ENCODE measurements at regions of chr15 and their contacts with region 1.

Region 1: DNA sequence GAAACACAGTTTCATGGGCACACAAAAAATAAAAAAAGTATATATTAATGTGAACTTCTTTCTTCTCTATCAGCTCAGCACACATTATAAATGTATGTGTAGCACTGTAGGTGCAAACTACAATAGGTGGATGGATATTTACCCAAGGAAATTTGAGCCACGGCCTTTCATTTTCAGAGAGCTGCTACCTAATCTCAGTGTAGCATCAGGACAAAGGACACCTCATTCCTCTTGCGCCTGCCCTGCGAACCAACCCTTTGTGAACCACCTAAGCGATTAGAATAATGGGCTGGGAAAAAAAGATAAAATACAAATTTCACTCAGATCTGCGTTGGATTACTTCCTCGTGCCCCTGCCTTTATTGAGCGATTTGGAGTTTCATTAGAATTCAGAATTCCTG is 263.2 kb downstream of the NR2F2 start:
- DNase-seq: no peak
- H3K4me3 ChIP-seq: no peak overlapping the region
- H3K27ac ChIP-seq: no peak overlapping the region
- H3K4me1 ChIP-seq: no peaks in the 10 kb centered on the region
- H3K27me3 ChIP-seq: no peaks in the 10 kb centered on the region
- CTCF ChIP-seq: no peak
- EP300 ChIP-seq: no peak
- POLR2A ChIP-seq: no peak

Region 2: DNA sequence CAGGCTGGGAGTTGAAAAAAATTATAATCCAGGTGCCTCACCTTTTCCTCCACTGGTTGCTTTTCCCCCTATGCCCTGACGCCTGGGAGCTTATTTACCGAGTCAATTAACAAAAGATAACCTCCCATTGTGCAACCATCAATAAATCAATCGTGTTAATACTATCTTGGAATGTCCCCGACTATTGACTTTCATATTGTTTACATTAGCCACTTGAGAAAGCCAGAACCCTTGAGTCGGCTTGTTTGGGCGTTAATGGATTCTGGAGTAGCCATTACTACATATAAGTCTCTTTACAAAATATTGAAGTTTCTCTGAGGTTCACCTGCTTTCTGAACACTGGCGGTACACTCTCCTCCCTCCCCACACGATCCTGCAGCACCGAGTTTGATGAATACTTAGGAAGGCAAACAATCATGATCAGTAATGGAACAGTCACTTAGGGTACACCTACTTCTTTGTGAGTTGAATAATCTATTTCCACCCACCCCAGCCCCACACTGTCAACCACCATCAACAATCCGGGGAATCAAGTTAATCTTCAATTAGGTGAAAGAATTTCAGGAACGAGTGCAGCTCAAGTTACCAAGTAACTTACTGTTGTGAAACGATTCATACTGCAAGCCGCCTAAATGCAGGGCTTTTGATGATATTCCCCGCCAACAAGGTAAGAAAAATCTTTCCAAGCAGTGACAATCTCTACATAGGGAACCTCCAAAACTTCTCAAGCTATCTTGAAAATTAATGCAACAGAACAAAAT is 422.6 kb before region 1 on chr15:
- in situ Hi-C with region 1: no loop called
- intact Hi-C with region 1: no loop called
- DNase-seq: no peak
- H3K4me3 ChIP-seq: no peak overlapping the region
- H3K27ac ChIP-seq: no peak overlapping the region
- H3K4me1 ChIP-seq: peaks cover 0 to 2% (median 0%) of the 10 kb centered on the region in 4 donors
- H3K27me3 ChIP-seq: no peaks in the 10 kb centered on the region
- CTCF ChIP-seq: no peak
- EP300 ChIP-seq: no peak
- POLR2A ChIP-seq: no peak

Region 3: GRCh38 chr15:96462777-96463750 is 130.7 kb before region 1 on chr15:
- in situ Hi-C with region 1: no loop called
- intact Hi-C with region 1: no loop called
- DNase-seq: no peak
- H3K4me3 ChIP-seq: no peak overlapping the region
- H3K27ac ChIP-seq: no peak overlapping the region
- H3K4me1 ChIP-seq: no peaks in the 10 kb centered on the region
- H3K27me3 ChIP-seq: peaks cover 5% of the 10 kb centered on the region
- CTCF ChIP-seq: no peak
- EP300 ChIP-seq: no peak
- POLR2A ChIP-seq: no peak

Region 4: DNA sequence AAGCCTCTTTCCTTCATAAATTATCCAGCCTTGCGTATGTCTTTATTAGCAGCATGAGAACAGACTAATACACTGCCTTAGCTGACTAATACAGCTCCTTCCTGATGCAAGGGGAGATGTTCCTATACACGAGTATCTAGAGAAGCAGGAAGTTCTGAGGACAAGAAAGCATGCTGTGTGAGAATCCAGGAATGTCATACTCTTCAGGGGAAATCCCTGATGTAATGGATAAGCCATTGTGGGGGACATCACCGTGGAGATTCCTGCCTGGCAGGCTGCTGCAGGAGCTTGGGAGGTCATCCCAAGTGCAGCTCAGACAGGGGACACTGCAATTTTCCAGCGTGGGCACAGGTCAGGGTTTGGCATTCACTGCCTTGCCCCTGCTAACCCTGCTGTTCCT is 213.6 kb after region 1 on chr15:
- in situ Hi-C with region 1: no loop called
- intact Hi-C with region 1: loop called (anchors 10 kb)
- DNase-seq: no peak
- H3K4me3 ChIP-seq: no peak overlapping the region
- H3K27ac ChIP-seq: no peak overlapping the region
- H3K4me1 ChIP-seq: no peaks in the 10 kb centered on the region
- H3K27me3 ChIP-seq: no peaks in the 10 kb centered on the region
- CTCF ChIP-seq: no peak
- EP300 ChIP-seq: no peak
- POLR2A ChIP-seq: no peak

Measured in transverse colon (tissue), 4 donors.